GM12878 (cell line): ENCODE measurements at regions of chr11 and their contacts with region 1.

Region 1: GRCh38 chr11:18540207-18541009 is 13.7 kb upstream of the TSG101 start:
- DNase-seq: no peak
- ATAC-seq: peak; percentile 84
- H3K4me3 ChIP-seq: no peak overlapping the region
- H3K27ac ChIP-seq: no peak overlapping the region
- H3K4me1 ChIP-seq: no peaks in the 10 kb centered on the region
- H3K27me3 ChIP-seq: no peaks in the 10 kb centered on the region
- CTCF ChIP-seq: peak; percentile 46 to 69 (median 56)
- EP300 ChIP-seq: no peak
- POLR2A ChIP-seq: no peak
- RAD21 ChIP-seq: peak; percentile 66

Region 2: DNA sequence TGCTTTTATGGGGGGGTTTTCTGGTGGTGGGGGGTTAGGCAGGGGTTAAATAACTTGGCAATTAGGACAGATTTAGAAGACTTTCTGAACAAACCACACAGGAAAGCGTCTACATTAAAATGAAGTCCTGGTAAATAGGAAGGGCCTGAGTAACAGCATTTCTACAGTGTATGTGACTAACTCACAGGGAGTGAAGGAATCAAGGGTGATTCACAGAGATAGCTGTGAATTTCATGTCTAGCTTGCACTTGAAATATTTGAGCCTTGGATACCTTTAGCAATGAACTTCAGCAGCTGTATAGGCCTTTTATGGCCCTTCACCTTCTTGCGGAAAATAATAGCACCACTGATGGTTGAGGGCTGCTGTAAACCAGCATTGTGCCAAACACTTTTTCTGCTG is 172.2 kb before region 1 on chr11:
- CTCF ChIA-PET with region 1: no interaction called
- POLR2A ChIA-PET with region 1: no interaction called
- RAD21 ChIA-PET with region 1: no interaction called
- SMC1A ChIA-PET with region 1: no interaction called
- in situ Hi-C with region 1: no loop called
- intact Hi-C with region 1: no loop called
- DNase-seq: no peak
- ATAC-seq: no peak
- H3K4me3 ChIP-seq: no peak overlapping the region
- H3K27ac ChIP-seq: no peak overlapping the region
- H3K4me1 ChIP-seq: no peaks in the 10 kb centered on the region
- H3K27me3 ChIP-seq: no peaks in the 10 kb centered on the region
- CTCF ChIP-seq: no peak
- EP300 ChIP-seq: no peak
- POLR2A ChIP-seq: no peak
- RAD21 ChIP-seq: no peak

Region 3: DNA sequence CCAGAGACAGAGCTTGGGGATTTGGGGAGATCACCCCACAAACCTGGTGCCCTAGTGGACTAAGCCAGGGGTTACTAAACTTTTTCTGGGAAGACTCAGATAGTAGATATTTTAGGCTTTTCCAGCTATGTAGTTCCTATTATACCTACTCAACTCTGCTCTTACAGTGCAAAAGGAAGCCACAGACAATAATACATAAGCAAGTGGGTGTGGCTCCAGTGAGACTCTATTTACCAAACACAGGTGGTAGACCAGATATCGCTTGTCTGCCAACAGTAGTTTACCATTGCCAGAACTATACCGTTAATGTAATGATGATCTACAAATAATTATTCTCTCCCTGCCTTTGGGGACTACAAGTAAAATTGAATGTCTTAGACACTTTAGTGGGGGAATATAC is 121.4 kb before region 1 on chr11:
- CTCF ChIA-PET with region 1: no interaction called
- POLR2A ChIA-PET with region 1: no interaction called
- RAD21 ChIA-PET with region 1: no interaction called
- SMC1A ChIA-PET with region 1: no interaction called
- in situ Hi-C with region 1: no loop called
- intact Hi-C with region 1: no loop called
- DNase-seq: no peak
- ATAC-seq: no peak
- H3K4me3 ChIP-seq: no peak overlapping the region
- H3K27ac ChIP-seq: no peak overlapping the region
- H3K4me1 ChIP-seq: no peaks in the 10 kb centered on the region
- H3K27me3 ChIP-seq: no peaks in the 10 kb centered on the region
- CTCF ChIP-seq: no peak
- EP300 ChIP-seq: no peak
- POLR2A ChIP-seq: no peak
- RAD21 ChIP-seq: no peak

Region 4: DNA sequence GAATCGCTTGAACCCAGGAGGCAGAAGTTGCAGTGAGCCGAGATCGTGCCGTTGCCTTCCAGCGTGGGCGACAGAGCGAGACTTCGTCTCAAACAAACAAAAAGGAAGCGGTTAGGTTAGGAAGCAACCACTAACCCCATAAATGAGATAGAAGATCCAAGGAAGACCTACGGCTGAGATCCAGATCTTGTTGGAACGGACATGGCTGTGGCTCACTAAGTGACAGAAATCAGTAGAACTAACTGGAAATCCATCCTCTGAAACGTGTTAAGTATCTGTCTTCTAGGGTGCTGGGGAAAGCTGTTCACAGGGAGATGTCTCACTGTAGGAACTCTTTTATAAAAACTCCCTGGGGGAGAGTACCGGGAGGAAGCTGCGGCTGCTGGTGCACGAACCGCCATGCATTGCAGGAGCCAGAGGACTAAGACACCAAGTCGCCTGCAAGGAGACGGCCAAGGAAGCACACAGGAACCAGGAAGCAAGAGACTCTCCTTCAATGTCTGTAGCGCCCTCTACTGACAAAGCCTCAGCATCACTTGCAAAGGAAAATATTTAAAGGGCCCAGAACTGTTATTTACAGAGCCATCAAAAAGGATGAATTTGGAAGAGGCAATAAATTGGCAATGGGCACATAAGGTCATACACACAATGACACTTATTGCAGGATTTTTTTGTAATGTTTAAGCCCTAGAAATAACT is 110.6 kb after region 1 on chr11:
- CTCF ChIA-PET with region 1: interaction called, 86 read pairs
- POLR2A ChIA-PET with region 1: no interaction called
- RAD21 ChIA-PET with region 1: interaction called, 11 read pairs
- SMC1A ChIA-PET with region 1: interaction called, 33 read pairs
- in situ Hi-C with region 1: loop called (anchors 5 kb)
- intact Hi-C with region 1: loop called (anchors 1 kb)
- DNase-seq: peak; percentile 20
- ATAC-seq: peak; percentile 94
- H3K4me3 ChIP-seq: no peak overlapping the region; the same call in 1 of the 2 replicates
- H3K27ac ChIP-seq: no peak overlapping the region
- H3K4me1 ChIP-seq: no peaks in the 10 kb centered on the region
- H3K27me3 ChIP-seq: no peaks in the 10 kb centered on the region
- CTCF ChIP-seq: peak; percentile 73 to 86 (median 75)
- EP300 ChIP-seq: no peak
- POLR2A ChIP-seq: peak; percentile 57; the same call in 1 of the 2 replicates
- RAD21 ChIP-seq: peak; percentile 87

Region 5: GRCh38 chr11:18741783-18742182 is 201.4 kb after region 1 on chr11:
- CTCF ChIA-PET with region 1: interaction called, 10 read pairs
- POLR2A ChIA-PET with region 1: interaction called, 4 read pairs
- RAD21 ChIA-PET with region 1: interaction called, 6 read pairs
- SMC1A ChIA-PET with region 1: interaction called, 3 read pairs
- in situ Hi-C with region 1: no loop called
- intact Hi-C with region 1: no loop called
- DNase-seq: no peak
- ATAC-seq: no peak
- H3K4me3 ChIP-seq: no peak overlapping the region
- H3K27ac ChIP-seq: no peak overlapping the region
- H3K4me1 ChIP-seq: no peaks in the 10 kb centered on the region
- H3K27me3 ChIP-seq: no peaks in the 10 kb centered on the region
- CTCF ChIP-seq: 0 out of 6 replicates have a peak, but pooled peaks of 1 of the 3 experiments have one; percentile 7
- EP300 ChIP-seq: no peak
- POLR2A ChIP-seq: no peak
- RAD21 ChIP-seq: no peak

Region 6: DNA sequence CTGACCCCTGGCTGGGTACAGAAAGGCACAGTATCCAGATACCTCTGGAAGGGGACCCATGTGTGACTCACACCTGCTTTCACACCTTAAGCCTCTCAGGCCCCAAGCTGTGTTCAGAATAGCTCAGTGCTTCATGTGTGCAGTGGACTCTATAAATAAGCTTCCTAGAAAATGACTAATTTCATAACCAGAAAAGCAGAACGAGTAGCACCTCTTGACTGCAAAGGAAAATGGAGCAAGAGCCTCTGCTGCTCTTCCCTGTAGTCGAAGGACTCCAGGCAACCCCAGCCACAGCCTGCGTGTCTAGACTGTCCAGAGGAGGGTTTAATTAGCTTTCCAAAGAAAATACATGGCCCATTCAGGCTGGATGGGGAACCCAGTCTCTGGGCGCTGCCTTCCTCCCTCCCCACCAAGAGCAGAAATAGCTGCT is 228.1 kb after region 1 on chr11:
- CTCF ChIA-PET with region 1: interaction called, 57 read pairs
- POLR2A ChIA-PET with region 1: no interaction called
- RAD21 ChIA-PET with region 1: interaction called, 44 read pairs
- SMC1A ChIA-PET with region 1: interaction called, 36 read pairs
- in situ Hi-C with region 1: no loop called
- intact Hi-C with region 1: no loop called
- DNase-seq: peak; percentile 77
- ATAC-seq: peak; percentile 80
- H3K4me3 ChIP-seq: no peak overlapping the region
- H3K27ac ChIP-seq: peak overlapping the region; percentile 35
- H3K4me1 ChIP-seq: peaks cover 38% of the 10 kb centered on the region
- H3K27me3 ChIP-seq: no peaks in the 10 kb centered on the region
- CTCF ChIP-seq: no peak
- EP300 ChIP-seq: peak; percentile 92 to 94
- POLR2A ChIP-seq: no peak
- RAD21 ChIP-seq: no peak